Natural killer cell (primary cell): ENCODE measurements at regions of chr10 and their contacts with region 1.

Region 1: GRCh38 chr10:14499601-14499904 is 168.8 kb upstream of the FRMD4A start:
- DNase-seq: no peak
- ATAC-seq: no peak
- H3K4me3 ChIP-seq: no peak overlapping the region
- H3K4me3 Mint-ChIP-seq: no peak overlapping the region
- H3K27ac ChIP-seq: no peak overlapping the region
- H3K27ac Mint-ChIP-seq: no peak overlapping the region
- H3K4me1 ChIP-seq: peaks cover 7% of the 10 kb centered on the region
- H3K4me1 Mint-ChIP-seq: peaks cover 6 to 11% of the 10 kb centered on the region in 2 donors
- H3K27me3 ChIP-seq: no peaks in the 10 kb centered on the region
- H3K27me3 Mint-ChIP-seq: peaks cover 0 to 9% of the 10 kb centered on the region in 2 donors
- CTCF ChIP-seq: no peak

Region 2: DNA sequence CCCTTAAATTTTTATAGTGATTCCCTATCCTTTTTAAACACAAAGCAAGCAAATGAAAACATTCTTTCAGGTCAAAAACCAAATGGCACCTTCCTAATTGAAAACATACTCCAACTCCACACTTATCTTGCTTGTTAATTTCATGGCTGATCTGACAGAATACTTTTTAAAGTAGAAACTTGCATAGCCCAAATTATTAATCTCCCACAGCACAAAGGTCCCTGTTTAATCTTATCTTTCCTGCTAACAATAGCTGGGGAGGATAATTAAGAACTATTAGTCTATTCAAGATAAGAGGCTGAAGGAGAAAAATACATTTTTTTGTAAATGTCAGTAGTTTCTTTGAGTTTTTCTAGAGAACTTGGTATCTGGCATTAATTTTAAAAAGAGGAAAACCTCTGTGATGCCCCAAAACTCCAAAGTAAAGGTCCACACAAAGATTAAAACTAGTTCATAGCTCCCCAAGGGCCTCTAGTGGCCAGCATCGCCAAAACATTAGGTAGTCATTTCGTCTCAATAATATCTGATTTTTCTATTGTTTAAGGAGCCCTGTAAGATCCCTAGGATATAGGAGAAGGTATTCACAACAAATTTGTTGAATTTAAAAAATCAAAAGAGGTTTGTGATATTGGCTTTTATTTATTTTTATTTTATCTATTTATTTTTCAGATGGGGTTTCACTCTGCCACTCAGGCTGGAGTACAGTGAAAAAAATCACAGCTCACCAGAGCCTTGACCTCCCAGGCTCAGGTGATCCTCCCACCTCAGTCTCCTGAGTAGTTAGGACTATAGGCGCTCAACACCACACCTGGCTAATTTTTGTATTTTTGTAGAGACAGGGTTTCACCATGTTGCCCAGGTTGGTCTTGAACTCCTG is 323.6 kb after region 1 on chr10:
- intact Hi-C with region 1: loop called (anchors 1 kb)
- DNase-seq: peak in 1 of 2 donors; percentile 69
- ATAC-seq: peak in 2 of 3 donors; percentile 64 to 67
- H3K4me3 ChIP-seq: no peak overlapping the region
- H3K4me3 Mint-ChIP-seq: no peak overlapping the region
- H3K27ac ChIP-seq: no peak overlapping the region
- H3K27ac Mint-ChIP-seq: no peak overlapping the region
- H3K4me1 ChIP-seq: no peaks in the 10 kb centered on the region
- H3K4me1 Mint-ChIP-seq: peaks cover 5% of the 10 kb centered on the region in 2 donors
- H3K27me3 ChIP-seq: no peaks in the 10 kb centered on the region
- H3K27me3 Mint-ChIP-seq: peaks cover 0 to 2% of the 10 kb centered on the region in 2 donors
- CTCF ChIP-seq: peak; percentile 76

Region 3: GRCh38 chr10:14904316-14904732 is 404.8 kb after region 1 on chr10:
- intact Hi-C with region 1: loop called (anchors 5 kb)
- DNase-seq: peak in 1 of 2 donors; percentile 62
- ATAC-seq: peak; percentile 79 to 96 (median 84)
- H3K4me3 ChIP-seq: no peak overlapping the region
- H3K4me3 Mint-ChIP-seq: no peak overlapping the region
- H3K27ac ChIP-seq: no peak overlapping the region
- H3K27ac Mint-ChIP-seq: peak overlapping the region in 1 of 2 donors; percentile 46
- H3K4me1 ChIP-seq: no peaks in the 10 kb centered on the region
- H3K4me1 Mint-ChIP-seq: peaks cover 0 to 5% of the 10 kb centered on the region in 2 donors
- H3K27me3 ChIP-seq: no peaks in the 10 kb centered on the region
- H3K27me3 Mint-ChIP-seq: no peaks in the 10 kb centered on the region
- CTCF ChIP-seq: peak; percentile 62

Region 4: DNA sequence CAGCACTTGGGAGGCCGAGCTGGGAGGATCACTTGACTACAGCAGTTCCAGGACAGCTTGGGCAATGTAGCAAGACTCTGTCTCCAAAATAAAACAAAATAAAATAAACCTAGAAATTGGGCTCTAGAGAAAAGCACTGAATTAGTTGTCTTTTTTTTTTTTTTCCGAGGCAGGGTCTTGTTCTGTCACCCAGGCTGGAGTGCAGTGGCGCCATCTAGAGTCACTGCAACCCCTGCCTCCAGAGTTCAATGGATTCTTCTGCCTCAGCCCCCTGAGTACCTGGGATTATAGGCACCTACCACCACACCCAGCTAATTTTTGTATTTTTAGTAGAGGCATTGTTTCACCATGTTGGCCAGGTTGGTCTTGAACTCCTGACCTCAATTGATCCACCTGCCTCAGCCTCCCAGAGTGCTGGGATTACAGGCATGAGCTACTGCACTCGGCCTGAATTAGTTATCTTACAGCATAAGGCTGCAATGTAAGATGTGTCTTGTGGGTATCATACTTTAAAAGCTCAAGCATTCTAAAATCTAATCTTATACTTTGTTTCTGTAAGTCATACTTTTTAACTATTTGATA is 472.4 kb after region 1 on chr10:
- intact Hi-C with region 1: loop called (anchors 1 kb)
- DNase-seq: peak in 1 of 2 donors; percentile 72
- ATAC-seq: no peak
- H3K4me3 ChIP-seq: no peak overlapping the region
- H3K4me3 Mint-ChIP-seq: no peak overlapping the region
- H3K27ac ChIP-seq: no peak overlapping the region
- H3K27ac Mint-ChIP-seq: no peak overlapping the region
- H3K4me1 ChIP-seq: no peaks in the 10 kb centered on the region
- H3K4me1 Mint-ChIP-seq: peaks cover 0 to 8% of the 10 kb centered on the region in 2 donors
- H3K27me3 ChIP-seq: no peaks in the 10 kb centered on the region
- H3K27me3 Mint-ChIP-seq: peaks cover 8 to 11% of the 10 kb centered on the region in 2 donors
- CTCF ChIP-seq: peak; percentile 61